GM13977 (cell line): ENCODE measurements at regions of chr7 and their contacts with region 1.

Region 1: DNA sequence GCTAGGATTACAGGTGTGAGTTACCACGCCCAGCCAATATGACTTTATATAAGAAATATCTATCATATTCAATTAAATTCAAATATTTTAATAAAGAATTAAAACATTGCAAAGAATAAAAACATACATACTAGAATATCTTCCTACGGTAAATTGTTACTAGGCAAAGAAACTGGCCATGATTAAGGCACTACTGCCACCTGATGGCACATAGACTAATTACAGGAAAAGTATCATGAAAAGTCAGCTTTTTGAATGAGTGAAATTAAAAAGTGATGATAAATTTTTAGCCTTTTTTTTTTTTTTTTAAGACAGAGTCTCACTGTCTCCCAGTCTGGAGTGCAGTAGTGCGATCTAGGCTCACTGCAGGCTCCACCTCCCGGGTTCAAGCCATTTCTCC is 30.9 kb downstream of the MRPS33 start:
- DNase-seq: no peak
- CTCF ChIP-seq: peak; percentile 34

Region 2: GRCh38 chr7:140403878-140404564 is 579.8 kb before region 1 on chr7 and contains the start of gene RAB19:
- in situ Hi-C with region 1: no loop called
- DNase-seq: peak; percentile 44
- CTCF ChIP-seq: no peak

Region 3: DNA sequence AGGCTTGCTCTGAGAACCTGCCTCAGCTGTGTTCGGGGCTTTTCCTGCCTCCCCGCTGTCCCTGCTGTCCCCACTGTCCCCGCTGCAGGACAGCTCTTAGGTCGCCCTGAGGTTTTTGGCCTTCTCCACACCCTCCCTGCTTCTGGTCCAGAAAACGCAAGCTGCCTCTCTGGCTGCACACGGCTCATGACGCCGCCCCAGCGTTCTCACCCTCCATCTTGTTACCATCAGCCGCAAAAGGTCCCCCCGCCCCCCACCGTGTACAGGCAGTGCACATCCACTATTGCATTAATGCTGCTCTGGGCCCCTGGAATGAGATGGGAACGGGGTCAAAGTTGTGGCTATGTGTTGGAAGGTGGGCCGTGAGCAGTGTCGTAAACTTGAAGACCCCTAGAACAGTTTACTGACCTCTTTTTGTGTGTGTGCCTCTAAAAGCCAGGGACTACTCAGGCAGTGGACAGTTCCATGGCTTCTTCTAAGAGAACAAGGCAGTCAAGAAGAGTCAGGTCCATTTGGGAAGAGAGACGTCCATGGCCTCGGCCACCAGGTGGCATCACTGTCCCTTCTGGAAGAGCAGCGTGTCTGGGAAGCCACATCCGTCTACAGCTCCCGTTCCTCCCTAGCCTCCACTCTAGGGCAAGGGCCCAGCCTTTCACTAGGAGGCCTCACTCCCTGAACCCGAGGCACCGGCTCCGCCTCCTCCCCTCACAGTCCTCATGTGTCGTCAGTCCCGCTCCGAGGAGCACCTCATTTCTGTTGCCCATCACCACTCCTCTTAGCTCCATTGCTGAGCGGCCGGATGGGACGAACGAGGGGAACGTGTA is 466.0 kb before region 1 on chr7:
- in situ Hi-C with region 1: loop called (anchors 25 kb)
- DNase-seq: peak; percentile 80
- CTCF ChIP-seq: peak; percentile 82

Region 4: GRCh38 chr7:140876519-140877248 is 107.1 kb before region 1 on chr7:
- in situ Hi-C with region 1: no loop called
- DNase-seq: no peak
- CTCF ChIP-seq: no peak

Region 5: GRCh38 chr7:141151746-141152145 is 167.9 kb after region 1 on chr7:
- in situ Hi-C with region 1: no loop called
- DNase-seq: no peak
- CTCF ChIP-seq: no peak